ENCODE measurements at regions of chr5 and their contacts with region 1.

Region 1: GRCh38 chr5:68343421-68343826 is 127.9 kb downstream of the PIK3R1 start:
- DNase-seq: peak; percentile 68
- H3K4me3 Mint-ChIP-seq: no peak overlapping the region
- H3K27ac Mint-ChIP-seq: no peak overlapping the region
- H3K4me1 Mint-ChIP-seq: peaks cover 34% of the 10 kb centered on the region
- H3K27me3 Mint-ChIP-seq: peaks cover 18% of the 10 kb centered on the region

Region 2: DNA sequence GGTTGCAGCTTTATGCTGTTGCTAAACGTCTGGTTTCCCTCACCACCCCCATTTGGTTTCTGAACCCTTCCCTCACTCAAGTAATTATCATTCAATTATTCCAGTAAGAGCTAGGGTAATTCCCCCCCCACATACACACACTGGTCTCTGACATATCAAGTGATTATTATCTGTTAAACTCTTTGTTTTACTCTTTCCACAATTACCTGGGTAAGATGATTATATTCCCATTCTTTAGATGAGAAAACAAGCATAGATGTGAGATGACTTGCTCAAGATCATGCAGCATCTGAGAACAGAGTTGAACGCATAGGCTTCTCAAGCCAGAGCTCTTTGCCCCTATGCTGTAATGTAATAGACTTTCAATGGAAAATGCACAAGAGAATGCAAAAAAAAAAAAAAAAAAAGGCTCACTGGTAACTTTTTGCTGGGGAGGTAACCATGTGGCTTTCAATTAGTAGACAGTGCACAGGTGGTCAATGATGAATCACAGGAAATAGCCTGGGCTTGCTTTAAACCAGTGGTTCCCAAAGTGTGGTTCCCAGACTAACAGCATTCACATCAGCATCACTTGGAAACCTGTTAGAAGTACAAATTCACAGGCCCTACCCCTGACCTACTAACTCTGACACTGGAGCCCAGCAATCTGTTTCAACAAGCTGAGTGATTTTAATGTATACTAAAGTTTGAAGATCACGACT is 40.2 kb before region 1 on chr5:
- intact Hi-C with region 1: loop called (anchors 1 kb)
- DNase-seq: no peak
- H3K4me3 Mint-ChIP-seq: peak overlapping the region; percentile 9
- H3K27ac Mint-ChIP-seq: peak overlapping the region; percentile 71
- H3K4me1 Mint-ChIP-seq: peaks cover 32% of the 10 kb centered on the region
- H3K27me3 Mint-ChIP-seq: peaks cover 8% of the 10 kb centered on the region

Region 3: DNA sequence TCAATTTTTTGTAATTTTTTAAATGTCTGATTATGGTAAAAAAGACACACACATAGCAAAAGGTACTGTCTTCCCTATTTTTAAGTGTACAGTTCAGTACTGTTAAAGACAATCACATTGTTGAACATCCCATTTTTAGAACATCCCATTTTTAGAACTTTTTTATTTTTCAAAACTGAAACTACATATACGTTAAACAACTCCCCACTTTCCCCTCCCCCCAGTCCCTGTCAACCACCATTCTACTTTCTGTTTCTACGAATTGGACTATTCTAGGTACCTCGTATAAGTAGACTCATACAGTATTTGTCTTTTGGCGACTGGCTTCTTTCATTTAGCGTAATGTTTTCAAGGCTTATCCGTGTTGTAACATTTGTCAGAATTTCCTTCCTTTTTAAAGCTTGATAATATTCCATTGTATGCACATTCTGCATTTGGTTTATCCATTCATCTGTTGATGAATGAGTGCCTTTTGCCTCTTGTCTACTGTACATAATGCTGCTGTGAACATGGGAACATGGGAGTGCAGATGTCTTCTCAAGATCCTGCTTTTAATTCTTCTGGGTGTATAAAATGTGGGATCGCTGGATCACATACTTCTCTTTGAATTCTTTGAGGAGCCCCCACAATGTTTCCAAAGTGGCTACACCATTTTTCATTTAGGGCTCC is 26.2 kb after region 1 on chr5:
- intact Hi-C with region 1: loop called (anchors 1 kb)
- DNase-seq: peak; percentile 90
- H3K4me3 Mint-ChIP-seq: peak overlapping the region; percentile 69
- H3K27ac Mint-ChIP-seq: peak overlapping the region; percentile 77
- H3K4me1 Mint-ChIP-seq: peaks cover 40% of the 10 kb centered on the region
- H3K27me3 Mint-ChIP-seq: no peaks in the 10 kb centered on the region

Region 4: DNA sequence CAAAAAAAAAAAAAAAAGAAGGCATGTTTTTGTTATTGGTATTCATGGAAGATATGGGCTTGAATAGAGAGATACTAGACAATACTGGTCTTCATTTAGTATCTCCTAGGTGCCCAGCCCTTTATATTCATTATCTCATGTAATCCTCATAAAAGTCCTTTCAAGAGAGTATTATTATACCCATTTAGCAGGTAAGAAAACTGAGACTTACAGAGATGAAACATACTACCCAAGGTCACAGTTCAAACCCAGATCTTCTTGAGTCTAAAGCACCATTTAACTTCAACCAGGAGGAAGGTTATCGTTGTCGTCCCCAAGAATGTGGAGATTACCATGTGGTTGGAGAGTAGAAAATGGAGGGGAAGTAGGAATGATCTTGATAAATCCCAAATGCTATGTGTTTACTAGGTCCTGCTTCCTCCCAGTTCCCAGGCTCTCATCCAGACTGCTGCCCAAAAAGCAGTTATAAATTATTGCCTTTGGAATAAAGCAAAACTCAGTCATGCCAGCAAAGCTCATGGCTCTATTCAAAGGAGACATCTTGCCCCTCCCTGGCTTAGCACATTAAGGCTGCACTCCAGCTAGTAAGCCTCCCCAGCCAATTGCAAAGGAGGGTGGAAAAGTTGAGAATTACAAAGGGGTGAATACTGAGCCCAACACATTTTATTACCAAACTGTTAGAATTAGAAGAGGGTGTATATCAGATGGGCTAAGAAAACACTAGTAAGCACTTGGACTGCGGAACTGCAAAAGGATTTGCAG is 36.0 kb after region 1 on chr5:
- intact Hi-C with region 1: loop called (anchors 1 kb)
- DNase-seq: no peak
- H3K4me3 Mint-ChIP-seq: no peak overlapping the region
- H3K27ac Mint-ChIP-seq: peak overlapping the region; percentile 70
- H3K4me1 Mint-ChIP-seq: peaks cover 66% of the 10 kb centered on the region
- H3K27me3 Mint-ChIP-seq: peaks cover 6% of the 10 kb centered on the region

Region 5: GRCh38 chr5:68424799-68425537 is 81.5 kb after region 1 on chr5:
- intact Hi-C with region 1: loop called (anchors 2 kb)
- DNase-seq: peak; percentile 82
- H3K4me3 Mint-ChIP-seq: peak overlapping the region; percentile 27
- H3K27ac Mint-ChIP-seq: peak overlapping the region; percentile 73
- H3K4me1 Mint-ChIP-seq: peaks cover 46% of the 10 kb centered on the region
- H3K27me3 Mint-ChIP-seq: peaks cover 15% of the 10 kb centered on the region

Region 6: GRCh38 chr5:68433923-68434879 is 90.8 kb after region 1 on chr5:
- intact Hi-C with region 1: loop called (anchors 1 kb)
- DNase-seq: peak; percentile 96
- H3K4me3 Mint-ChIP-seq: peak overlapping the region; percentile 66
- H3K27ac Mint-ChIP-seq: peak overlapping the region; percentile 84
- H3K4me1 Mint-ChIP-seq: peaks cover 54% of the 10 kb centered on the region
- H3K27me3 Mint-ChIP-seq: peaks cover 37% of the 10 kb centered on the region